OCI-LY7 (cell line): ENCODE measurements at regions of chr18 and their contacts with region 1.

Region 1: GRCh38 chr18:11908182-11909060 is at the start of gene MPPE1:
- DNase-seq: peak; percentile 94
- H3K4me3 ChIP-seq: peak within 1 kb of the TSS; percentile 78
- H3K27ac ChIP-seq: peak within 1 kb of the TSS; percentile 80
- H3K4me1 ChIP-seq: peaks cover 16% of the 10 kb centered on the region
- CTCF ChIP-seq: no peak
- total RNA-seq, gene MPPE1: 26.5 and 32.5 TPM in 2 replicates

Region 2: DNA sequence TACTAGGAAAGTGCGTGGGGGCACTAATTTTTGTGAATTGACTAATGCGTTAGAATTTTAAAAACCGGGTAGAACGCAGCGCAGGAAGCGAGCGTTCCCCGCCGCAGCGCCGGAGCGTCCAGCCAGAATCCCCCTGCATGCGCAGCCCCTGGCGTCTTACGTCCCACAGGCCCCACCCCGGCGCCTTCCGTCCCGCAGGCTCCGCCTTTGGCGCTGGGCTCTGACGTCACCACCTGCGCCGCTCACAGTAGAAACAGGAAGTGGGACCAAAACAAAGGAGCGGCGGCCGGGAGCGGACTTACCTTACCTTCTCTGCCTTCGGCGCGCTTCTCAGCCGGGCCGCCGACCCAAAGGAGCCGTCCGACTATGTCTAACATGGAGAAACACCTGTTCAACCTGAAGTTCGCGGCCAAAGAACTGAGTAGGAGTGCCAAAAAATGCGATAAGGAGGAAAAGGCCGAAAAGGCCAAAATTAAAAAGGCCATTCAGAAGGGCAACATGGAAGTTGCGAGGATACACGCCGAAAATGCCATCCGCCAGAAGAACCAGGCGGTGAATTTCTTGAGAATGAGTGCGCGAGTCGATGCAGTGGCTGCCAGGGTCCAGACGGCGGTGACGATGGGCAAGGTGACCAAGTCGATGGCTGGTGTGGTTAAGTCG is 57.1 kb before region 1 on chr18 and contains the start of gene CHMP1B:
- CTCF ChIA-PET with region 1: no interaction called
- POLR2A ChIA-PET with region 1: no interaction called
- intact Hi-C with region 1: loop called (anchors 1 kb)
- DNase-seq: peak; percentile 97
- H3K4me3 ChIP-seq: peak within 1 kb of the TSS; percentile 90
- H3K27ac ChIP-seq: peak within 1 kb of the TSS; percentile 35
- H3K4me1 ChIP-seq: peaks cover 25% of the 10 kb centered on the region
- CTCF ChIP-seq: no peak
- total RNA-seq, gene CHMP1B: 29.3 and 31.5 TPM in 2 replicates

Region 3: GRCh38 chr18:11883153-11883552 is 25.3 kb before region 1 on chr18:
- CTCF ChIA-PET with region 1: no interaction called
- POLR2A ChIA-PET with region 1: no interaction called
- intact Hi-C with region 1: loop called (anchors 2 kb)
- DNase-seq: peak; percentile 86
- H3K4me3 ChIP-seq: peak overlapping the region; percentile 31
- H3K27ac ChIP-seq: peak overlapping the region; percentile 75
- H3K4me1 ChIP-seq: peaks cover 39% of the 10 kb centered on the region
- CTCF ChIP-seq: no peak